ENCODE measurements at regions of chr5 and their contacts with region 1.

Region 1: GRCh38 chr5:27377626-27378025 is 339.2 kb upstream of the CDH9 start:
- DNase-seq: no peak
- ATAC-seq: no peak

Region 2: GRCh38 chr5:27328480-27328879 is 49.1 kb before region 1 on chr5:
- intact Hi-C with region 1: loop called (anchors 2 kb)
- DNase-seq: no peak
- ATAC-seq: no peak

Region 3: GRCh38 chr5:27437594-27438200 is 60.1 kb after region 1 on chr5:
- intact Hi-C with region 1: no loop called
- DNase-seq: no peak
- ATAC-seq: no peak

Region 4: DNA sequence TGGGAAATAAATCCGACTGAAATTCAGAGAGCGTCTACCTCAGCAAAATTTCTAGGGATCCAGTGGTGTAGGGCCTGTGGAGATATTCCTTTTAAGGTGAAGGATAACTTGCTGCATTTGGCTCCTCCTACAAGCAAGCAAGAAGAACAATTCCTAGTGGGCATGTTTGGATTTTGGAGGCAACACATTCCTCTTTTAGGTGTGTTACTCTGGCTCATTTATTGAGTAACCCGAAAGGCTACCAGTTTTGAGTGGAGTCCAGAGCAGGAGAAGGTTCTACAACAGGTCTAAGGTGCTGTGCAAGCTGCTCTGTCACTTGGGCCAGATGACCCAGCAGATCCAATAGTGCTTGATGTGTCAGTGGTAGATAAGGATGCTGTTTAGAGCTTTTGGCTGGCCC is 523.1 kb after region 1 on chr5:
- intact Hi-C with region 1: loop called (anchors 5 kb)
- DNase-seq: no peak
- ATAC-seq: no peak